Dendritic cell treated with granulocyte-macrophage colony-stimulating factor and Interleukin-4, amounts not matched to agents 40 ng/mL and 50 ng/mL, for 4 days (primary cell): ENCODE measurements at regions of chr2 and their contacts with region 1.

Region 1: DNA sequence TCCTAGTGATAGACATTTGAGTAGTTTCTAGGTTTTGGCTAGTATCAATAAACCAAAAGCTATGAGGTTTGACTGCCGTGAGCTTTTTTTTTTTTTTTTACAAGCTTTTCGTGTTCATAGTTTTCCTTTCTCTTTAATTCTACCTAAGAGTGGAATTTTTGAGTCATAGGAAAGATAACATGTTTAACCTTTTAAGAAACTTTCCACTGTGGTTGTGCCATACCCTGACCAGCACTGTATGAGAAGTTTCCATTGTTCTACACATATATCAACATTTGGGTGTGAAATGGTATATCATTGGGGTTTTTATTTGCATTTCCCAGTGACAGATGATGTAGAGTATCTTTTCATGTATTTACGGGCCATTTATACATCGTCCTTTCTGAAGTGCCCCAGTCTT is 31.7 kb downstream of the UBE2F start:
- H3K4me3 Mint-ChIP-seq: no peak overlapping the region
- H3K27ac Mint-ChIP-seq: no peak overlapping the region
- H3K4me1 Mint-ChIP-seq: no peaks in the 10 kb centered on the region
- H3K27me3 Mint-ChIP-seq: no peaks in the 10 kb centered on the region

Region 2: DNA sequence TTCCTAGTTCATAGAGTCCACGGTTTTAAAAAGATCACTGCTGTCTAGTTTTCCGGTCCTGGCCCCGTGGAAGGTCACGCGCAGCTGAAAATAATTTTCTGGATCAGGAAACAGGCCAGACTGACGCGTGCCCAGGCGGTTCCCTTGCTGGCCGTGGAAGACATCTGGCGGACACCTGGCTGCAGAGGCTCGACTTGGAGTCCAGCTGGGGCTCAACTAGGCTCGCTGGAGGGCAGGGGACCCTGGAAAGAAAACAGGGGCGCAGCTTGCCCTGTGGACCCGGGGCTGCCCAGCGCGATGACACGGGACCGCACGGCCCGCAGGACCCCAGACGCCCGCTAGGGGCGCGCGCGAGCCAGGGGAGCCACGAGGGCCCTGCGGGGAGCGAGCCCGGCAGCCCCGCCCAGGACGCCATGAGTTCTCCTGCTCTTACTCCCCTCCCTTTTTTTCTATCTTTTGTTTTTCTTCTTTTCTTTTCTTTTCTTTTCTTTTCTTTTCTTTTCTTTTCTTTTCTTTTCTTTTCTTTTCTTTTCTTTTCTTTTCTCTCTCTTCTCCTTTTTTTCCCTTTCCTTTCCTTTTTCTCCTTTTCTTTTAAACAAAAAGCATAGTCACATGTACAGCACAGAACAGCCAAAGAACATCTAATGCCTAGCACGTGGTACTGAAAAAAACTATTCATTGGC is 74.9 kb before region 1 on chr2:
- intact Hi-C with region 1: loop called (anchors 5 kb)
- H3K4me3 Mint-ChIP-seq: peak overlapping the region; percentile 75
- H3K27ac Mint-ChIP-seq: peak overlapping the region; percentile 88
- H3K4me1 Mint-ChIP-seq: peaks cover 54% of the 10 kb centered on the region
- H3K27me3 Mint-ChIP-seq: peaks cover 39% of the 10 kb centered on the region

Region 3: DNA sequence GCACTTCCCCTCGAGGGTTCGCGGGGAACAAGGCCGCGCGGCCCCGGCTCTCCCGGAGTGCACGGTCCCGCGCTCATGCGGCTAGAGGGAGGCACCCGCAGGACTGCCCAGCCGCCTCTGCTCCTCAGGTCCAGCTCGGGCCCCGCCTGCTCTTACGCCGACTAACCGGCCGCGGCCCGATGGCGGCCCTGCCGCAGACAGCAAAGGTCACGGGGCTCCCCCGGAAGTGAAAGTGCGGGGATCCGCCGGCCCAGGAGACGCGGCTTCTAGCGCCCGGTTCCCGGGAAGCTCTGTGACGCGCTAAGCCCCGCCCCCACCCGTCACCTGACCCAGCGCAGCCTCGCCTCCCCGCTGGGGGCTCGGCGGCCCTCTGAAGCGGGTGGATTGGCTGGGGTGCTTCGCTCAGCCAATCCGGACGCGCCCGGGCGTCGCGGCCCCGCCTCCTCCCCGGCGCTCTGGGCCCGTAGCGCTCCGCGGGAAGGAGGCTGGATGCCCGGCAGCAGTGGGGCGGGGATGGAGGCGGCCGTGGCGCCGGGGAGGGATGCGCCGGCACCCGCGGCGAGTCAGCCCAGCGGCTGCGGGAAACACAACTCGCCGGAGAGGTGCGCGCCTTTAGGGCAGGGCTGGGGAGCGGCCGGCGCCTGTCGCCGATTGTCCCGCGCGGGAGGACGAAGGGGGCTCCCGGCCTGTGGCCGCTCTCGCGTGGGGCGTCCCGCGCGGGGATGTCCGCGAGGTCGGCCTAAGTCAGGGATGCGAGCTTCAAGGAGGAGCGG is 62.2 kb after region 1 on chr2 and contains the start of gene SCLY:
- intact Hi-C with region 1: no loop called
- H3K4me3 Mint-ChIP-seq: peak within 1 kb of the TSS; percentile 91
- H3K27ac Mint-ChIP-seq: peak within 1 kb of the TSS; percentile 90
- H3K4me1 Mint-ChIP-seq: peaks cover 29% of the 10 kb centered on the region
- H3K27me3 Mint-ChIP-seq: peaks cover 22% of the 10 kb centered on the region